MCF 10A (cell line): ENCODE measurements at regions of chr5 and their contacts with region 1.

Region 1: DNA sequence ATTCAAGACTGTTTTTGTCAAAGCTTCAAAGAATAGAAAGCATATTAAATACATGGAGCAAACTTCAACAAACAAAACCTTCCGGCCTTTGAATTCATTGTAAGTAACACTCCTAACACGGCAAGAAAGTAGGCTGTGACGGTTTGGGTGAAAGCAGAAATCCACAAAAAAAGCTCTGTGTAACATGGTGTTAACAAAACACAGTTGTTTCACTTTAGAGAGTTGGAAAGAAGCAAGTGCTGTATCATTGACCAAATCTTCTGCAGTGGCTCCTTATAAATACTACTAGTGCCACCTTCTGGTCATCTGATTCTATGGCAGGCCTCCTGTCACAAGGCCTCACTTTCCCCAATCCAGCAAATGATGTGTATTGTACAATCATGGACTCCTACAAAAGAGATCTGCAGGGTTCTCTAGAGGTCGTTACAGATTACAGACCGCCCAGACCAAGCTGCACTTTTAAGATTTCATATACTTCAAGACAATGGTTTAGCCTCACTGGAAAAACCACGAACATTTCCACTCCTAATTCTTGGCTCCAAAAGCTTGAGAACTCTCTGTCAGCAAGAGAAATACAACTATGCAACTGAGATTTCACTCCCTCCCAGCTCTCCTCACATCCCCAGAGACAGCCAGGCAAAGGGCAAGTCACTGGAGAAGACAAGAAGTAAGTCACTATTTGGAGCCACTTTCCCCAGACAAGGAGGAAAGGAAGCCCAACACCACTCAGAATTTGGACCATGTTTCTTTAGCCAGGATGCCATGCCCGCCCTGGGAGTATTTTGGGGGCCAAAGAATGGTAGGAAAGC is 196.2 kb downstream of the DTWD2 start:
- DNase-seq: peak; percentile 70
- H3K4me3 Mint-ChIP-seq: no peak overlapping the region
- H3K27ac Mint-ChIP-seq: no peak overlapping the region
- H3K4me1 Mint-ChIP-seq: no peaks in the 10 kb centered on the region
- H3K27me3 Mint-ChIP-seq: no peaks in the 10 kb centered on the region
- CTCF ChIP-seq: peak; percentile 60

Region 2: GRCh38 chr5:117590944-117591343 is 1201.2 kb before region 1 on chr5:
- CTCF ChIA-PET with region 1: interaction called, 4 read pairs
- POLR2A ChIA-PET with region 1: no interaction called
- intact Hi-C with region 1: loop called (anchors 2 kb)
- DNase-seq: peak; percentile 67
- H3K4me3 Mint-ChIP-seq: no peak overlapping the region
- H3K27ac Mint-ChIP-seq: no peak overlapping the region
- H3K4me1 Mint-ChIP-seq: peaks cover 20% of the 10 kb centered on the region
- H3K27me3 Mint-ChIP-seq: no peaks in the 10 kb centered on the region
- CTCF ChIP-seq: peak; percentile 59

Region 3: GRCh38 chr5:118775799-118776499 is 16.2 kb before region 1 on chr5:
- CTCF ChIA-PET with region 1: interaction called, 35 read pairs
- POLR2A ChIA-PET with region 1: no interaction called
- intact Hi-C with region 1: no loop called
- DNase-seq: peak; percentile 27
- H3K4me3 Mint-ChIP-seq: no peak overlapping the region
- H3K27ac Mint-ChIP-seq: no peak overlapping the region
- H3K4me1 Mint-ChIP-seq: no peaks in the 10 kb centered on the region
- H3K27me3 Mint-ChIP-seq: no peaks in the 10 kb centered on the region
- CTCF ChIP-seq: no peak